Activated CD4-positive, alpha-beta T cell treated with anti-CD3 and anti-CD28 coated beads, Interleukin-2, amount 10 ng/mL, durations not matched to agents 24 days and 14 days (primary cell): ENCODE measurements at regions of chr15 and their contacts with region 1.

Region 1: DNA sequence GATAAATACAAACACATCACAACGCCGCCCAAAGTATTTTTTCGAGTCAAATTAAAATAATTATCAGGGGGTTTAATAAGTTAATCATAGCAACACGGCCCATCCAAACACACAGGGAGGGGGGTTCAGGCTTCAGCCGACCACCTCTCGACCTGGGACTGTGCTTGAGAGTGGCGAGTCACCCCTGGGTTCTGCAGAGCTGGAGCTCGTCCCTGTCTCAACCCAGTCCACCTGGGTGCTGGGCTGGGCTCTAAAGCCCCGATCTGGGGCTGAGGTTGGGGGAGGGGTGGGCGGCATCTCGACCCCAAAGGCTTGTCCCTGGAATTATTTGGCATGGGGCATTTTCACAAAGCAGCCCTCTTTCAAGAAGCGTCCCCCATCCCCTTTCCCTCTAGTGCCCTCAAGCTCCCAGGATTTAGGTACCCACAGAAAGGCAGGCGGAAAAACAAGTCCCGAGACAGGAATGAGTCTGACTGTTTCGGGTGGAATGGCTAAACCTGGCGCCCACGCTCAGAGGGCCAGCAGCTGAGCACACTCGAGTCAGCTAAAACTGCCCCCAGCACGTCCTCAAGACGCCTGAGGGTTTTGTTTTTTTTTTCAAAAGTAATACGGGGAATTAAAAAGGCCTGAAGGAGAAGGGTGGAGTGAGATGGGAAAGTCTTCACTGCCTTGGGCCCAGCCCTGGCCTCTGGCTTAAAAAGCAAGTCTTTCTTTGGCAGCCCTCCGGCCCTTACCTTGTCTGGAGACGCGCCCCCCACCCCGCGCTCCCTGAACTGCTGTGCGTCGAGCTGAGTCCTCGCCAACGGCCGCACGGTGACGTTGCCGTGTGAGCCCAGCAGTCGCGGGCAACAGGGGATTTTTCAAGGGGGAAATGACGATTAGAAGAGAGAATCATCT is 32.5 kb downstream of the NR2F2 start:
- DNase-seq: no peak
- H3K4me3 Mint-ChIP-seq: no peak overlapping the region
- H3K27ac Mint-ChIP-seq: peak overlapping the region; percentile 3
- H3K4me1 Mint-ChIP-seq: peaks cover 3% of the 10 kb centered on the region
- H3K27me3 Mint-ChIP-seq: peaks cover 80% of the 10 kb centered on the region

Region 2: DNA sequence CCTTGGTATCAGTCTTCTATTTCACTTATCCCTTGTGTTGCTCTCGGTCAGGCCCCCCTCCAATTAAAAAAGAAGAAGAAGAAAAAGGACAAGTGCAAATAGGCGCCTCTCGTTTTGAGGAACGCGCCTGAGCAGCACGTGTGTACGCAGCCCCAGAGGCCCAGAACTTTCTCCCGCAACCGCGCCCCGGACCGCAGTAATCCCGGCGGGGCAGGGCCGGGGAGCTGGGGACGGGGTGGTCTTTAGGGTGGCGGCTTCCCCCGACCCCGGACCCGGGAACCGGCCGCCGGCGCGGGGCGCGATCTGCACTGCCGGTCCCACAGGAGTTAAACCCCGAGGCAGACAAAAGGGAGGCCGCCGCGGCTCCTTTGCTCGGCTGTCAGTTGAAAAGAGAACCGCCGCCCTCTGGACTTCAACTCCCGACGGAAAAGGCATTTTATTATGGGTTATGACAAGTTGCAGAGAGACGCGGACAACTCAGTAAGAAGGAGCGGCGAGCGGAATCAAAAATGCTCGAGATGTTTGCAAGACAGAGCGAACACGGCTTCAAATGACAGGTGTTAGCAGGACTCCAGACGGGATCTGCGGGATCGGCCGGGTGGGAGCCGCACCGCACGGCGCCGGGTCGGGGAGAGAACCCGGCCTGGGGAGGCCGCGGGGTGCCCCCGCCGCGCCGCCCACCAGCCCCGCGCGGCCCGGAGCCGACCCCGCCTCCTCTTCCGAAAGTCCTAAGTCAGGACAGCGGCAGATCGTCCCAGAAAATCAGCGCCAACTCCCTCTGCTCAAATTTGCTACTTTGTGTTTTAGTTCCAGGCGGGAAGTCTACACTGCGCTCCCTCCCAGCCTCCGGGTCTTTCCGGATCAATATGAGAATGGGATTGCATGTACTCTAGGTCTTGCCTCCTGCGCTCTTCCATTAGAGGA is 46.5 kb after region 1 on chr15:
- intact Hi-C with region 1: loop called (anchors 2 kb)
- DNase-seq: peak; percentile 55
- H3K4me3 Mint-ChIP-seq: no peak overlapping the region
- H3K27ac Mint-ChIP-seq: no peak overlapping the region
- H3K4me1 Mint-ChIP-seq: peaks cover 3% of the 10 kb centered on the region
- H3K27me3 Mint-ChIP-seq: peaks cover 72% of the 10 kb centered on the region